CD8-positive, alpha-beta T cell (primary cell): ENCODE measurements at regions of chr12 and their contacts with region 1.

Region 1: GRCh38 chr12:50084775-50085614 is at the start of gene SMARCD1:
- DNase-seq: peak; percentile 66 to 94 (median 86)
- ATAC-seq: peak; percentile 81
- H3K4me3 ChIP-seq: peak within 1 kb of the TSS; percentile 87
- H3K4me3 Mint-ChIP-seq: peak within 1 kb of the TSS; percentile 94
- H3K27ac ChIP-seq: peak within 1 kb of the TSS; percentile 90
- H3K27ac Mint-ChIP-seq: peak within 1 kb of the TSS; percentile 98
- H3K4me1 ChIP-seq: peaks cover 10% of the 10 kb centered on the region
- H3K4me1 Mint-ChIP-seq: peaks cover 43% of the 10 kb centered on the region
- H3K27me3 ChIP-seq: no peaks in the 10 kb centered on the region
- H3K27me3 Mint-ChIP-seq: no peaks in the 10 kb centered on the region
- CTCF ChIP-seq: peak; percentile 12
- total RNA-seq, gene SMARCD1: 90.2 to 92.1 TPM

Region 2: DNA sequence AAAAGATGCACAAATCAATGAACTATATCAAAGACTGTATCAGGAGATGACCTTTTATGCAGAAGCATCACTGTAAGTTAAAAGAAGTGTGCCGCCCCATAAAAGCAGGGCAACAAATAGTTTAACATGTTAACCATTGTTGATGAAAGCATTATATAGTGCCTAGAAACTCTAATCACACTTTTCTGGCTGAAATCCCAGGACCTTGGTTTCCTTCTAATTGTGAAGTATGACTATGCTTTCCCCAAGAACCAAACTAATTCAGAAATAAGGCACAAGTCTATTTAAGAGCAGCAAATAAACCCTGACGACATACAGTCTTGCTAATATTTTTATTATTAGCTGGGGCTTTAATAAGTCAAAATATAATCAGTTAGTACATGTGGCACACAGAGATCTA is 81.4 kb before region 1 on chr12:
- CTCF ChIA-PET with region 1: no interaction called
- POLR2A ChIA-PET with region 1: no interaction called
- intact Hi-C with region 1: no loop called
- DNase-seq: no peak
- ATAC-seq: no peak
- H3K4me3 ChIP-seq: no peak overlapping the region
- H3K4me3 Mint-ChIP-seq: no peak overlapping the region
- H3K27ac ChIP-seq: no peak overlapping the region
- H3K27ac Mint-ChIP-seq: no peak overlapping the region
- H3K4me1 ChIP-seq: no peaks in the 10 kb centered on the region
- H3K4me1 Mint-ChIP-seq: no peaks in the 10 kb centered on the region
- H3K27me3 ChIP-seq: no peaks in the 10 kb centered on the region
- H3K27me3 Mint-ChIP-seq: no peaks in the 10 kb centered on the region
- CTCF ChIP-seq: no peak

Region 3: GRCh38 chr12:50025187-50026059 is 59.6 kb before region 1 on chr12 and contains the start of gene RACGAP1:
- CTCF ChIA-PET with region 1: no interaction called
- POLR2A ChIA-PET with region 1: interaction called, 3 read pairs
- intact Hi-C with region 1: loop called (anchors 1 kb)
- DNase-seq: peak; percentile 88 to 99 (median 94)
- ATAC-seq: peak; percentile 97
- H3K4me3 ChIP-seq: peak within 1 kb of the TSS; percentile 62 to 78
- H3K4me3 Mint-ChIP-seq: peak within 1 kb of the TSS; percentile 98
- H3K27ac ChIP-seq: peak within 1 kb of the TSS; percentile 38 to 63
- H3K27ac Mint-ChIP-seq: peak within 1 kb of the TSS; percentile 86
- H3K4me1 ChIP-seq: no peaks in the 10 kb centered on the region
- H3K4me1 Mint-ChIP-seq: peaks cover 16% of the 10 kb centered on the region
- H3K27me3 ChIP-seq: no peaks in the 10 kb centered on the region
- H3K27me3 Mint-ChIP-seq: no peaks in the 10 kb centered on the region
- CTCF ChIP-seq: no peak
- total RNA-seq, gene RACGAP1: 2.2 to 2.8 TPM

Region 4: GRCh38 chr12:50103767-50104321 is 18.8 kb after region 1 on chr12 and contains the start of gene GPD1:
- CTCF ChIA-PET with region 1: interaction called, 121 read pairs
- POLR2A ChIA-PET with region 1: interaction called, 4 read pairs
- intact Hi-C with region 1: no loop called
- DNase-seq: no peak
- ATAC-seq: peak; percentile 64
- H3K4me3 ChIP-seq: no peak within 1 kb of the TSS
- H3K4me3 Mint-ChIP-seq: no peak within 1 kb of the TSS
- H3K27ac ChIP-seq: no peak within 1 kb of the TSS
- H3K27ac Mint-ChIP-seq: no peak within 1 kb of the TSS
- H3K4me1 ChIP-seq: no peaks in the 10 kb centered on the region
- H3K4me1 Mint-ChIP-seq: no peaks in the 10 kb centered on the region
- H3K27me3 ChIP-seq: no peaks in the 10 kb centered on the region
- H3K27me3 Mint-ChIP-seq: no peaks in the 10 kb centered on the region
- CTCF ChIP-seq: no peak
- total RNA-seq, gene GPD1: 0.24 to 0.50 TPM

Region 5: DNA sequence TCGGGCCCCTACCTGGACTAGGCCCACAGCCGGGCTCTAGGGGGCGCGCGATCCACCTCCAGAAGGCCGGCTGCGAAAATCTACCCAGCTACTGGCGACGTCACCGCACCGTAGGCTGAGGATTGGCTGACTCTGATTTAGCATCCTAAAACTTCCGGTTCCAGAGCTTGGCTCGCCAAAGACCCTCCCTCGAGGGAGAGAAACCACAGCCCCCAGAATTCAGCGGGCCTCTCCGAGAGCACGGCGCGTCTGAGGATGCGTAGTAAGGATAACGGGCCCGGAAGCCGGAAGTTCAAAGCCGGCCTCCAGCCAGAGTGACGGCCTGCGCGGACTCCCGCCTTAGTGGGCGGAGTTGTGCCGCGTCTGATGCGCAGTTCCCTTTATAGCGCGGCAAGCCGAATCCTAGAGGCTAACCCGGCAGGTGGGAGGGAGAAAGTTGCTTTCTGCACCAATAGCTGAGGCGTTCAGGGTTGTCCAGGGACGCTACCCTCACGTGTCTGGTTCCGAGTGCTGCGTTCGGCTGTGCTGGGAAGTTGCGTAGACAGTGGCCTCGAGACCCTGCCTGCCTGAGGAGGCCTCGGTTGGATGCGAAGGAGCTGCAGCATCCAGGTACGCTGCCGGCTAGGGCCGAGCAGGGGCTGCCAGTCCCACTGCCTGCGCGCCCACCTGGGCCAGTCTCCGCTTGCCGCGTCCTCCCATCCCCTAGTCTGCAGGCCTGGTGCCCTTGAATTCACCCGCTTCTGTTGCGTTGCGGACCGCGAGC is 26.9 kb after region 1 on chr12 and contains the start of gene COX14:
- CTCF ChIA-PET with region 1: interaction called, 121 read pairs
- POLR2A ChIA-PET with region 1: interaction called, 50 read pairs
- intact Hi-C with region 1: loop called (anchors 1 kb)
- DNase-seq: peak; percentile 98 to 100 (median 99)
- ATAC-seq: peak; percentile 82
- H3K4me3 ChIP-seq: peak within 1 kb of the TSS; percentile 88 to 98
- H3K4me3 Mint-ChIP-seq: peak within 1 kb of the TSS; percentile 99
- H3K27ac ChIP-seq: peak within 1 kb of the TSS; percentile 97 to 98
- H3K27ac Mint-ChIP-seq: peak within 1 kb of the TSS; percentile 95
- H3K4me1 ChIP-seq: peaks cover 36% of the 10 kb centered on the region
- H3K4me1 Mint-ChIP-seq: peaks cover 35% of the 10 kb centered on the region
- H3K27me3 ChIP-seq: no peaks in the 10 kb centered on the region
- H3K27me3 Mint-ChIP-seq: no peaks in the 10 kb centered on the region
- CTCF ChIP-seq: peak; percentile 97
- total RNA-seq, gene COX14: 42.2 to 43.3 TPM

Region 6: GRCh38 chr12:50167041-50167828 is 82.2 kb after region 1 on chr12 and contains the start of gene CERS5:
- CTCF ChIA-PET with region 1: interaction called, 67 read pairs
- POLR2A ChIA-PET with region 1: interaction called, 16 read pairs
- intact Hi-C with region 1: loop called (anchors 1 kb)
- DNase-seq: peak; percentile 92 to 98 (median 96)
- ATAC-seq: peak; percentile 95
- H3K4me3 ChIP-seq: peak within 1 kb of the TSS; percentile 85 to 90
- H3K4me3 Mint-ChIP-seq: peak within 1 kb of the TSS; percentile 92
- H3K27ac ChIP-seq: peak within 1 kb of the TSS; percentile 88 to 93
- H3K27ac Mint-ChIP-seq: peak within 1 kb of the TSS; percentile 95
- H3K4me1 ChIP-seq: peaks cover 15% of the 10 kb centered on the region
- H3K4me1 Mint-ChIP-seq: peaks cover 29% of the 10 kb centered on the region
- H3K27me3 ChIP-seq: no peaks in the 10 kb centered on the region
- H3K27me3 Mint-ChIP-seq: no peaks in the 10 kb centered on the region
- CTCF ChIP-seq: no peak
- total RNA-seq, gene CERS5: 45.2 to 46.2 TPM

Region 7: DNA sequence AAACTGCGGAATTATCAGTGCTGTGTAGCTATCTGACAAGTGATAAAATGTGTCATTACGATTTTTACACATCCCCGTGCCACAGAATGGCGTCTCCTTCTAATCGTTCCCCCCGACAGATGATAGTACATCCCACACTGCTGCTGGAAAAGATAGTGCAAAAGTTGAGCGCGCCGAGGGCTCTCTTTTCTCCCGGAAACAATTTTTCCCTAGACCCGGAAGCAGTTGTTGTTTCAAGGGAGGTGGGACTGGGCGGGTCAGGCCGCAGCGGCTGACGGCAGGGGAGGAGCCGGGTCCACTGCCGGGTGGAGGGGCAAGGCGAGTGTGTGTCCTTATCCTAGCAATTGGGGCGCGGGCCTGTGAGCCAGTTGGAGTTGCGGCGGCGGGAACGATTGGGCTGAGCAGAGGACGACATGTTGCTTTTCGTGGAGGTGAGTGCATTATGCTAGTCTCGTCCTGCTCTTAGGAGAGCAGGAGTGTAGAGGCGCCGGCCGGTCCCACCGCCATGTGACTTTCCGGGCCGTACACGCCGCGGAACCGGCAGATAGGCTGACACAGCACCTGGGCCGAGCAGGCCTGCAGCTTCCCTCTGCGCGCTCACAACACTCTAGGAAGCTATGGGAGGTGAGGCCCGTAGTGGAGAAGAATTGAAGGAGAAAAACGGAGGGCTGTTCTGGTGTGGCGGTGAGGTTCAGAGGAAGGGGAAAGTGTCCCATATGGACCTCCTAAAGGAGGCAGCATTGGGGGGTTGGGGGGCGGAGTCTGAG is 315.8 kb after region 1 on chr12 and contains the start of gene LARP4:
- CTCF ChIA-PET with region 1: no interaction called
- POLR2A ChIA-PET with region 1: no interaction called
- intact Hi-C with region 1: loop called (anchors 2 kb)
- DNase-seq: peak; percentile 78 to 94 (median 89)
- ATAC-seq: peak; percentile 95
- H3K4me3 ChIP-seq: peak within 1 kb of the TSS; percentile 97 to 100
- H3K4me3 Mint-ChIP-seq: peak within 1 kb of the TSS; percentile 99
- H3K27ac ChIP-seq: peak within 1 kb of the TSS; percentile 63 to 72
- H3K27ac Mint-ChIP-seq: peak within 1 kb of the TSS; percentile 97
- H3K4me1 ChIP-seq: peaks cover 23% of the 10 kb centered on the region
- H3K4me1 Mint-ChIP-seq: peaks cover 38% of the 10 kb centered on the region
- H3K27me3 ChIP-seq: no peaks in the 10 kb centered on the region
- H3K27me3 Mint-ChIP-seq: peaks cover 5% of the 10 kb centered on the region
- CTCF ChIP-seq: no peak
- total RNA-seq, gene LARP4: 20.1 to 22.3 TPM

Region 8: DNA sequence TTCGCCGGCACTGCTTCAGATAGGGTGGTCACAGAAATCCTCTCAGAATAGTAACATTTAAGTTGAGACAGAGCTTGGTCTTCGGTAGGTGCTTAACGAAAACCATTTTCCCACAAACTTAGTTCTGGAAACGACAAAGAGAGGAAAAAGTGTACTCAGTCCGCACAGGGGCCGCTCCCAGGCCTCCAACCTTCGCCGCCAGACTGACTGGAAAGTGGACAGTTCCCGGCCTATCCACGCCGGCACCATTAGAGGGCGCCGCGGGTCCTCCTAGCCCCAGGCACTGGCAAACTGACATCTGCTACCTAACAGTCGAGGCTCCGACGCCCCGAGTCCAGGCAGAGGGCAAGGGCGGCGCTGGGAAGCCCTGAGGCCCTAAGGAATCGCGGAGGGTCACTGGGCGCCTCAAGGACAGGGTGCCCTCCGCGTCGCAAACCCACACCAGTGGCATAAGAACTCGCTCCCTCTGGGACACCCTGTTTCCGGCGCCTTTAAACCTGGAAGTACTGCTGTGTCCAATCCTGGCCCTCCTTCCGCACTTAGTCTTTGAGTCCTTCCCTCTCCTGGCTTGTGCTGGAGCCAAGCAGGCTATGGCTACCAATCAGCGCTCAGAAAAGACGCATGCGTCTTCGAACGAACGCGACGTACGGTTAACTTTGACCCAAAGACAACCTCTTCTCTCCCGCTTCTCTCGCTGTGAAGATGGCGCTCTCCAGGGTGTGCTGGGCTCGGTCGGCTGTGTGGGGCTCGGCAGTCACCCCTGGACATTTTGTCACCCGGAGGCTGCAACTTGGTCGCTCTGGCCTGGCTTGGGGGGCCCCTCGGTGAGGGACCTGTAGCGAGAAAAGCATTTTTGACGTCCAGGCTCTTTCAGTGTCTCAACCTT is 962.9 kb after region 1 on chr12 and contains the start of gene LETMD1:
- CTCF ChIA-PET with region 1: no interaction called
- POLR2A ChIA-PET with region 1: no interaction called
- intact Hi-C with region 1: loop called in 1 of 2 experiments (anchors 2 kb)
- DNase-seq: peak; percentile 83 to 99 (median 88)
- ATAC-seq: peak; percentile 94
- H3K4me3 ChIP-seq: peak within 1 kb of the TSS; percentile 79 to 83
- H3K4me3 Mint-ChIP-seq: peak within 1 kb of the TSS; percentile 98
- H3K27ac ChIP-seq: peak within 1 kb of the TSS; percentile 74 to 96
- H3K27ac Mint-ChIP-seq: peak within 1 kb of the TSS; percentile 97
- H3K4me1 ChIP-seq: peaks cover 23% of the 10 kb centered on the region
- H3K4me1 Mint-ChIP-seq: peaks cover 34% of the 10 kb centered on the region
- H3K27me3 ChIP-seq: no peaks in the 10 kb centered on the region
- H3K27me3 Mint-ChIP-seq: no peaks in the 10 kb centered on the region
- CTCF ChIP-seq: peak; percentile 95
- total RNA-seq, gene LETMD1: 51.3 to 55.2 TPM